CD8-positive, alpha-beta T cell (primary cell): ENCODE measurements at regions of chr5 and their contacts with region 1.

Region 1: GRCh38 chr5:134026521-134027268 is 21.9 kb upstream of the VDAC1 start:
- DNase-seq: peak in 8 of 9 experiments; percentile 15 to 76 (median 60)
- ATAC-seq: peak; percentile 100
- H3K4me3 ChIP-seq: no peak overlapping the region
- H3K4me3 Mint-ChIP-seq: no peak overlapping the region
- H3K27ac ChIP-seq: no peak overlapping the region
- H3K27ac Mint-ChIP-seq: no peak overlapping the region
- H3K4me1 ChIP-seq: no peaks in the 10 kb centered on the region
- H3K4me1 Mint-ChIP-seq: peaks cover 4% of the 10 kb centered on the region
- H3K27me3 ChIP-seq: no peaks in the 10 kb centered on the region
- H3K27me3 Mint-ChIP-seq: peaks cover 2% of the 10 kb centered on the region
- CTCF ChIP-seq: peak; percentile 58

Region 2: GRCh38 chr5:134140530-134141201 is 114.0 kb after region 1 on chr5:
- CTCF ChIA-PET with region 1: interaction called, 773 read pairs
- POLR2A ChIA-PET with region 1: interaction called, 4 read pairs
- intact Hi-C with region 1: loop called in 1 of 2 experiments (anchors 1 kb)
- DNase-seq: peak in 7 of 9 experiments; percentile 3 to 83 (median 67)
- ATAC-seq: peak; percentile 39
- H3K4me3 ChIP-seq: no peak overlapping the region
- H3K4me3 Mint-ChIP-seq: peak overlapping the region; percentile 22
- H3K27ac ChIP-seq: peak overlapping the region; percentile 30 to 88
- H3K27ac Mint-ChIP-seq: peak overlapping the region; percentile 96
- H3K4me1 ChIP-seq: peaks cover 58% of the 10 kb centered on the region
- H3K4me1 Mint-ChIP-seq: peaks cover 80% of the 10 kb centered on the region
- H3K27me3 ChIP-seq: no peaks in the 10 kb centered on the region
- H3K27me3 Mint-ChIP-seq: no peaks in the 10 kb centered on the region
- CTCF ChIP-seq: peak; percentile 76

Region 3: GRCh38 chr5:134153657-134154056 is 127.0 kb after region 1 on chr5:
- CTCF ChIA-PET with region 1: interaction called, 773 read pairs
- POLR2A ChIA-PET with region 1: interaction called, 14 read pairs
- intact Hi-C with region 1: no loop called
- DNase-seq: no peak
- ATAC-seq: no peak
- H3K4me3 ChIP-seq: no peak overlapping the region
- H3K4me3 Mint-ChIP-seq: no peak overlapping the region
- H3K27ac ChIP-seq: peak overlapping the region in 1 of 2 experiments; percentile 12
- H3K27ac Mint-ChIP-seq: peak overlapping the region; percentile 71
- H3K4me1 ChIP-seq: peaks cover 57% of the 10 kb centered on the region
- H3K4me1 Mint-ChIP-seq: peaks cover 89% of the 10 kb centered on the region
- H3K27me3 ChIP-seq: no peaks in the 10 kb centered on the region
- H3K27me3 Mint-ChIP-seq: no peaks in the 10 kb centered on the region
- CTCF ChIP-seq: no peak

Region 4: DNA sequence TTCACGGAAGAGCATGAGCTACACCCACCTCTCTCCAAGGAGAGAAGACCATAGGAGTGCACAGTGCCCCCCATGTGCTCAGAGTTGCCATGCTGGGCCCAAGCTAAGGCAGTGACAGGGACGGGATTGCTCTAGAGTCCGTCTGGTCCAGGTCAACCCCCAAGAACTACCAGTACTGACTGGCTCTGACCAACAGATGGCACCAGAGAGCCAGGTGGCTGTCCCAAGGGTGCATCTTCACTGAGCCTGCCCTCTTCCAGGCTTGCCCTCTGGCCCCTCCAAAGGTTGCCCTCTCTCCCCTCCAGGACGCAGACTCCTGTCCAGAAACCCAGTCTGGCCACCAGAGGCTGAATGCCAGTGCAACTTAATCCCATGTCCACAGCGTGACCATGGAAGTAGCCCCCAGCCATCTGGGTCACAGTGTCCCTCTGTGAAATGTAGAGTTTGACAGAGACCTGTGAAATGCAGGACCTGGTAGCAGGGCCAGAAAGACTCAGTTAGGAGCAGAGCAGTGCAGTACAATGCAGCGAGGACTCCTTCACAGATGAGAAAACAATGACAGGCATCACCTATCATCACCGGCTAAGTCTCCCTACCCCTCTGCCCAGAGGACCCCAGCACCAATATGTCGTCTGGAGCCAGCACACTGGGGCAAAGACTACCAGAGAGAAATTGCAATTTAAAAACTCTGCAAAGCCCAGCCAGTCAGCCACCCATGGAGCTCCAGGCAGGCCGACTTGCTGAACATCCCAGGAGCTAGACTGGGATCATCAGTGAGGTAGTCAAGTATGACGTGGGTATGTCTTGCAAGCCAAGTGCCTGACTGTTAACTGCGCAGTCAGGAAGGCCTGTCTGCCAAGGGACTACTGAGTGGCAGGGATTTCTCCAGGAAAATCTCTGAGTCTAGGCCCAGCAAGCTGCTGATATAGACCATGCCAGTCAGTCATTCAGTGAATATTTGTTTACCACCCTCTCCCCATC is 157.8 kb after region 1 on chr5:
- CTCF ChIA-PET with region 1: interaction called, 31 read pairs
- POLR2A ChIA-PET with region 1: no interaction called
- intact Hi-C with region 1: loop called in 1 of 2 experiments (anchors 1 kb)
- DNase-seq: peak; percentile 62 to 84 (median 77)
- ATAC-seq: peak; percentile 98
- H3K4me3 ChIP-seq: no peak overlapping the region
- H3K4me3 Mint-ChIP-seq: no peak overlapping the region
- H3K27ac ChIP-seq: no peak overlapping the region
- H3K27ac Mint-ChIP-seq: no peak overlapping the region
- H3K4me1 ChIP-seq: peaks cover 4% of the 10 kb centered on the region
- H3K4me1 Mint-ChIP-seq: no peaks in the 10 kb centered on the region
- H3K27me3 ChIP-seq: no peaks in the 10 kb centered on the region
- H3K27me3 Mint-ChIP-seq: no peaks in the 10 kb centered on the region
- CTCF ChIP-seq: peak; percentile 84

Region 5: GRCh38 chr5:134289509-134290113 is 262.9 kb after region 1 on chr5:
- CTCF ChIA-PET with region 1: interaction called, 8 read pairs
- POLR2A ChIA-PET with region 1: no interaction called
- intact Hi-C with region 1: loop called (anchors 1 kb)
- DNase-seq: peak in 8 of 9 experiments; percentile 14 to 77 (median 40)
- ATAC-seq: peak; percentile 72
- H3K4me3 ChIP-seq: no peak overlapping the region
- H3K4me3 Mint-ChIP-seq: no peak overlapping the region
- H3K27ac ChIP-seq: no peak overlapping the region
- H3K27ac Mint-ChIP-seq: no peak overlapping the region
- H3K4me1 ChIP-seq: no peaks in the 10 kb centered on the region
- H3K4me1 Mint-ChIP-seq: no peaks in the 10 kb centered on the region
- H3K27me3 ChIP-seq: no peaks in the 10 kb centered on the region
- H3K27me3 Mint-ChIP-seq: peaks cover 2% of the 10 kb centered on the region
- CTCF ChIP-seq: peak; percentile 59